Activated CD4-positive, alpha-beta T cell treated with anti-CD3 and anti-CD28 coated beads, Interleukin-2, amount 10 ng/mL, durations not matched to agents 7 days and 5 days (primary cell): ENCODE measurements at regions of chr2 and their contacts with region 1.

Region 1: DNA sequence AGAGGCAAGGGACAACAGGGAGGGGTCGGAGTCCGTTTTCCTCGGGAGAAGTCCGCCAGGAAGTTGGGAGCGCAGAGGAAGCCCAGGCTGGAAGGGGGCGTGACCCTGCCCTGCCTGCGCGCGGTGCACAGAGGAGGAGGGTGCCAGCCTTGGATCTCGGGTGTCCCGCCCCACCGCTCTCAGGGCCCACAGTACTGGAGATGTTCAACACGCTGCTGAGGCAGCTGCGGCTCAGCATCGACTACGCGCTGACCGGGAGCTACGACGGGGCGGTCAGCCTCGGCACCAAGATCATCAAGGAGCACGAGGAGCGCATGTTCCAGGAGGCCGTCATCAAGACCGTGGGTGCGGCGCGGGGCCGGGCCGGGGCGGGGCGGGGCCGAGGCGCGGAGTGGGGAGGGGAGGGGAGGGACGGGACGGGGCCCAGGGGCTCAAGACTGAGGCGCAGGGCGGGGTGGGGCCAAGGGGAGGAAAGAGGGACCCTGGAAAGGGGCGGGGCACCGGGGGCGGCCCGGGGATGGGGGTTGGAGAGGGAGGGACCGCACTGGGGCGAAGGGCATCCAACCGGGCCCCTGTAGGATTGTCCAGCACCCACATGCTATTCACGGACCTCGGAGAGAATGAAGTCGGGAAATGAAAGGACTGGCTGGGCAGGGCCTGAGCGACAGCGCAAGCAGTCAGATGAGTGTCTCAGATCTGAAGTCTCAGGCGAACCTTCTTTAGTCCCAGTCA is 36.6 kb downstream of the POMC start:
- DNase-seq: peak; percentile 20
- H3K4me3 Mint-ChIP-seq: peak overlapping the region; percentile 56
- H3K27ac Mint-ChIP-seq: no peak overlapping the region
- H3K4me1 Mint-ChIP-seq: peaks cover 16% of the 10 kb centered on the region
- H3K27me3 Mint-ChIP-seq: peaks cover 52% of the 10 kb centered on the region

Region 2: GRCh38 chr2:24971536-24972314 is 160.0 kb before region 1 on chr2 and contains the start of gene DNAJC27:
- CTCF ChIA-PET with region 1: interaction called, 44 read pairs
- POLR2A ChIA-PET with region 1: no interaction called
- DNase-seq: peak; percentile 97
- H3K4me3 Mint-ChIP-seq: peak within 1 kb of the TSS; percentile 97
- H3K27ac Mint-ChIP-seq: peak within 1 kb of the TSS; percentile 100
- H3K4me1 Mint-ChIP-seq: peaks cover 19% of the 10 kb centered on the region
- H3K27me3 Mint-ChIP-seq: no peaks in the 10 kb centered on the region
- total RNA-seq, gene DNAJC27: 6.0 to 7.7 TPM